PC-9 (cell line): ENCODE measurements at regions of chr2 and their contacts with region 1.

Region 1: GRCh38 chr2:222912117-222912516 is 51.3 kb downstream of the ACSL3 start:
- DNase-seq: no peak
- H3K4me3 ChIP-seq: no peak overlapping the region
- H3K27ac ChIP-seq: peak overlapping the region; percentile 21; the same call in 1 of the 2 replicates
- H3K4me1 ChIP-seq: 0 out of 2 replicates have a peak, but pooled peaks cover 5% of the 10 kb centered on the region
- H3K27me3 ChIP-seq: no peaks in the 10 kb centered on the region
- CTCF ChIP-seq: no peak

Region 2: GRCh38 chr2:222844323-222844722 is 67.8 kb before region 1 on chr2:
- CTCF ChIA-PET with region 1: no interaction called
- POLR2A ChIA-PET with region 1: no interaction called
- intact Hi-C with region 1: no loop called
- DNase-seq: peak in 1 of 2 experiments; percentile 79
- H3K4me3 ChIP-seq: peak overlapping the region; percentile 6; the same call in 1 of the 2 replicates
- H3K27ac ChIP-seq: peak overlapping the region; percentile 64
- H3K4me1 ChIP-seq: peaks cover 88% of the 10 kb centered on the region
- H3K27me3 ChIP-seq: no peaks in the 10 kb centered on the region
- CTCF ChIP-seq: no peak

Region 3: DNA sequence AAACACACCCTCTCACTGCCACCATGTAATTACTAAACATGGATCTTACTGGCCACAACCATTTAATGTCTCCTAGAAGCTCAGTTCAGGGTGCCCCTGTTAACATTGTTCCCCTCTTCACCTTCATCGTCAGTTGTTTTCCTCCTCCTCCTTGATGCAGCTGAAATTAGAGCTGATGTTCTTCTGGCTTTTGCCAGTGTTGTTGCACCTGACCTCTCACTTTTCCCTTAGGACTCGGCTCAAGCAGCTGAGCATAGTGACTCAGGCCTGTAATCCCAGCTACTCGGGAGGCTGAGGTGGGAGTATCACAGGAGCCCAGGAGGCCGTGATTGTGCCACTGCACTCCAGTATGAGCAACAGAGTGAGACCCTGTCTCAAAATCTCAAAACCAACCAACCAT is 19.5 kb after region 1 on chr2:
- CTCF ChIA-PET with region 1: interaction called, 3 read pairs
- POLR2A ChIA-PET with region 1: interaction called, 13 read pairs
- intact Hi-C with region 1: no loop called
- DNase-seq: no peak
- H3K4me3 ChIP-seq: no peak overlapping the region
- H3K27ac ChIP-seq: no peak overlapping the region
- H3K4me1 ChIP-seq: no peaks in the 10 kb centered on the region
- H3K27me3 ChIP-seq: no peaks in the 10 kb centered on the region
- CTCF ChIP-seq: no peak

Region 4: DNA sequence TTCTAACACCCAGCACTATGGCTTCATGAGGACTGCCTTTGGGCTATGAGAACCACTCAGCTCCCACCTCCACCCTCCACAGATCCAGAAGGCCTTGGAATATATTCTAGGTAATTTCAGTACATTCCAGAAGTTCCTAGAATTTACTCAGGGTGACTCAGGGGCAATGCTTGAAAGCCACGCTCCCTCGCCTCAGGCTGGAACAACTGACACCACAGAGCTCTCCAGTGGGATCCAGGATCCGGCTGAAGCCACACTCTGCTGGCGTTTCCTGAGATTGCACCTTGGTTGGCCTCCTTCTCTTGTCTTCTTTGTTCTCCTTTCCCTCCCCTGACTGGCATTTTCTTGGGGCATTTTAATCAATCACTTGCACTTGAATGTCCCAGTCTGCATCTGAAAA is 47.2 kb after region 1 on chr2:
- CTCF ChIA-PET with region 1: no interaction called
- POLR2A ChIA-PET with region 1: interaction called, 3 read pairs
- intact Hi-C with region 1: loop called (anchors 1 kb)
- DNase-seq: peak; percentile 96 to 98
- H3K4me3 ChIP-seq: no peak overlapping the region
- H3K27ac ChIP-seq: peak overlapping the region; percentile 55
- H3K4me1 ChIP-seq: peaks cover 18% of the 10 kb centered on the region
- H3K27me3 ChIP-seq: no peaks in the 10 kb centered on the region
- CTCF ChIP-seq: peak; percentile 79

Region 5: DNA sequence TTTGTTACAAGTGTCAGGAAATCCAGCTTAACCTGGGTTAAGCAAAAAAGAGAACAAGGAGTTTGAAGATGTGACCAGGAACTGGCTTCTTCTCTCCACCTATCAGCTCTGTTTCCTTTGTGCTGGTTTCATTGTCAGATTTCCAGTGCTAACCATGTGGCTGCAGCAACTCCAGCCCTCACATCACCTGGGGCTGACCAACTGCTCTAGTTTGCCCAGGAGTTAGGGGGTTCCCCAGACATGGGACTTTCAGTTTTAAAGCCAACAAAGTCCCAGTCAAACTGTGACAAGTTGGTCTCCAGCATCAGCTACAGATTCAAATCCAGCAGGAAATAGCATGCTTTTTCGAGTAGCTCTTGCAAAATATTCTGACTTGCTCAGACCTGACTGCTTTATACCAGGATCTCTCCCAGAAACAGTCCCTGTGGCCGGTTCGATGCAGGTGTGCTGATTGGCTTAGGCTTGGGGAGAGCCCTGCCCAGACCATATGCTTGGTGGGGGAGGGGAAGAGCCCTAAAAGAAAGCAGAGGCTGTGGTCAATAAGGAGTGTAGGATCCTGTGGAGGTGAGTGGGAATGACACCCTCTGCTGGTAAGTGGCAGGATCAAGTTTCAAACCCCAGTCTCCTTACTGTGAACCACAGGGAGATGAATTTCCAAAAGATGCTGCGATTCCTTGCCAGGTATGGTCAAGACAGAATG is 189.4 kb after region 1 on chr2:
- CTCF ChIA-PET with region 1: no interaction called
- POLR2A ChIA-PET with region 1: no interaction called
- intact Hi-C with region 1: loop called (anchors 5 kb)
- DNase-seq: peak in 1 of 2 experiments; percentile 51
- H3K4me3 ChIP-seq: no peak overlapping the region
- H3K27ac ChIP-seq: no peak overlapping the region
- H3K4me1 ChIP-seq: peaks cover 5% of the 10 kb centered on the region; the same call in 1 of the 2 replicates
- H3K27me3 ChIP-seq: no peaks in the 10 kb centered on the region
- CTCF ChIP-seq: peak; percentile 86